Panc1 (cell line): ENCODE measurements at regions of chr14 and their contacts with region 1.

Region 1: GRCh38 chr14:69191340-69192111 is at the start of gene EXD2:
- DNase-seq: peak; percentile 39
- ATAC-seq: peak; percentile 99
- H3K4me3 ChIP-seq: peak within 1 kb of the TSS; percentile 66 to 68
- H3K27ac ChIP-seq: peak within 1 kb of the TSS; percentile 69
- H3K4me1 ChIP-seq: no peaks in the 10 kb centered on the region; the same call in 1 of the 2 replicates
- H3K27me3 ChIP-seq: no peaks in the 10 kb centered on the region
- CTCF ChIP-seq: no peak
- total RNA-seq, gene EXD2: 9.5 TPM

Region 2: GRCh38 chr14:68834816-68835215 is 356.7 kb before region 1 on chr14:
- CTCF ChIA-PET with region 1: no interaction called
- POLR2A ChIA-PET with region 1: interaction called, 19 read pairs
- in situ Hi-C with region 1: no loop called
- intact Hi-C with region 1: no loop called
- DNase-seq: no peak
- ATAC-seq: no peak
- H3K4me3 ChIP-seq: no peak overlapping the region
- H3K27ac ChIP-seq: no peak overlapping the region
- H3K4me1 ChIP-seq: no peaks in the 10 kb centered on the region
- H3K27me3 ChIP-seq: no peaks in the 10 kb centered on the region
- CTCF ChIP-seq: no peak